Dorsolateral prefrontal cortex (tissue), 120 donors: ENCODE measurements at regions of chr1 and their contacts with region 1.

Region 1: GRCh38 chr1:162056043-162056442 is 13.4 kb upstream of the NOS1AP start:
- DNase-seq: peak; percentile 47 to 81 (median 72)
- H3K4me3 ChIP-seq: no peak overlapping the region
- H3K27ac ChIP-seq: no peak overlapping the region
- H3K27me3 ChIP-seq: peaks cover 0 to 4% (median 0%) of the 10 kb centered on the region in 45 donors
- CTCF ChIP-seq: peak; percentile 50 to 98 (median 89)

Region 2: GRCh38 chr1:161994175-161994668 is 61.8 kb before region 1 on chr1:
- intact Hi-C with region 1: no loop called
- DNase-seq: peak in 9 of 10 donors; percentile 51 to 77 (median 71)
- H3K4me3 ChIP-seq: peak overlapping the region in 34 of 59 donors; percentile 1 to 54 (median 24)
- H3K27ac ChIP-seq: peak overlapping the region in 58 of 59 donors; percentile 24 to 91 (median 77)
- H3K27me3 ChIP-seq: no peaks in the 10 kb centered on the region
- CTCF ChIP-seq: no peak

Region 3: GRCh38 chr1:162230096-162230495 is 174.1 kb after region 1 on chr1:
- intact Hi-C with region 1: loop called in 1 of 2 experiments (anchors 5 kb)
- DNase-seq: peak in 3 of 10 donors; percentile 35 to 49 (median 44)
- H3K4me3 ChIP-seq: no peak overlapping the region
- H3K27ac ChIP-seq: peak overlapping the region in 4 of 59 donors; percentile 0 to 29 (median 11)
- H3K27me3 ChIP-seq: no peaks in the 10 kb centered on the region
- CTCF ChIP-seq: peak in 49 of 56 donors; percentile 13 to 66 (median 43)

Region 4: DNA sequence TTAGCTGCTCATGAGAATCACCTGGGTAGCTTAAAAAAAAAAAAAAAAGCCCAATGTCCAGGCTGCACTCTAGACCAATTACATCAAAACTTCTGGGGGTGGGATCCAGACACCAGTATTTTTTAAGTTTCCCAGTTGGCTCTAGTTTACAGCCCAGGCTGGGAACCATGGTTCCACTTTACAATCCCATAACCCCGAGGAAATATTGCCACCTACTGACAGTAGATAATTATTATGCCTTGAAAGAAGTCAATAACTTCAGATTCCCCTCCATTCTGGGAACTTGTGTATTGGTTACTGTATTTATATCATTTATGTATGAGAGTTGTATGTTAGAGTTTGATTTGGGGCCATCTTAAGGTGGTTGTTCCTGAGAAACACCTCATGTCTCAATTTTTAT is 220.4 kb after region 1 on chr1:
- intact Hi-C with region 1: loop called (anchors 2 to 5 kb)
- DNase-seq: no peak
- H3K4me3 ChIP-seq: no peak overlapping the region
- H3K27ac ChIP-seq: no peak overlapping the region
- H3K27me3 ChIP-seq: no peaks in the 10 kb centered on the region
- CTCF ChIP-seq: peak in 55 of 56 donors; percentile 26 to 75 (median 53)

Region 5: GRCh38 chr1:162391790-162392563 is 335.9 kb after region 1 on chr1:
- intact Hi-C with region 1: loop called (anchors 5 to 10 kb)
- DNase-seq: peak in 4 of 10 donors; percentile 28 to 48 (median 34)
- H3K4me3 ChIP-seq: peak overlapping the region in 17 of 59 donors; percentile 0 to 44 (median 24)
- H3K27ac ChIP-seq: no peak overlapping the region
- H3K27me3 ChIP-seq: peaks cover 0 to 7% (median 0%) of the 10 kb centered on the region in 45 donors
- CTCF ChIP-seq: peak; percentile 66 to 87 (median 78)